ENCODE measurements at regions of chr9 and their contacts with region 1.

Region 1: GRCh38 chr9:99112750-99113413 is 8.0 kb downstream of the TGFBR1 start:
- DNase-seq: no peak
- ATAC-seq: peak; percentile 32
- H3K4me3 ChIP-seq: peak overlapping the region; percentile 10; the same call in 1 of the 2 replicates
- H3K27ac ChIP-seq: no peak overlapping the region
- H3K4me1 ChIP-seq: peaks cover 3% of the 10 kb centered on the region; the same call in 1 of the 2 replicates
- H3K27me3 ChIP-seq: no peaks in the 10 kb centered on the region
- CTCF ChIP-seq: no peak
- EP300 ChIP-seq: no peak
- POLR2A ChIP-seq: no peak
- RAD21 ChIP-seq: no peak

Region 2: DNA sequence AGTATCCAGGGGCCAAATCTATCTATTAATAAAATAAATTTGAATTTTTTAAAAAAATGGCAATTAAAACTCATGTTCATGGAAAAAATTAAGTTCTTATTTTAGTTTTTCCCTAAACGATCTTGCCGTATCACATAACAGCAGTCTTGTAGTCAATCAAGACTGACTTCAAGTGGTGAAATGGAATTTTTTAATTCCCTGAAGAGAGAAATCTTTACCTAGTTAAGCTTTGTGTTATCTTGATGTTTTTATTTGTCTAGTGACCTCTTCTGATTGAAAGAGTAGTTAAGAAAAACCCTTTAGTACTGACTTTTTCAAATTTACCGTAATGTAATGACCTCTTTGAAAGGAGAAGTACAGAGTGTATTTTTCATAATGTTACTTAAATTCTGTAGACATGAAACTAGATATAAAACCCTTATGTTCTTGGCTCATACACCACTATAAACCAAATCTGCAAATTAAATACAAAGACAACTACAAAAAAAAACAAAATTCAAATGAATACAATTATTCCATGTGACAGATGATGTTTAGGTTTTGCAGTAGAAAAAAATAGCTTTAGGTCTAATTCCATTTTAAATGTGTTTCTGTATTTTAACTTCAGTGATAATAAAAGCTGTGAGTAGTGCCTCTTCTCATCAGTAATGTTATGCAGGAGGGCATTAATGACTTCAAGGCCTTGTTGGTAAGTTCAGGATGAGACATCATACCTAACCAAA is 11.8 kb after region 1 on chr9:
- CTCF ChIA-PET with region 1: interaction called, 7 read pairs
- POLR2A ChIA-PET with region 1: interaction called, 9 read pairs
- RAD21 ChIA-PET with region 1: interaction called, 8 read pairs
- SMC1A ChIA-PET with region 1: interaction called, 12 read pairs
- in situ Hi-C with region 1: no loop called
- intact Hi-C with region 1: no loop called
- DNase-seq: no peak
- ATAC-seq: no peak
- H3K4me3 ChIP-seq: no peak overlapping the region
- H3K27ac ChIP-seq: no peak overlapping the region
- H3K4me1 ChIP-seq: peaks cover 36% of the 10 kb centered on the region
- H3K27me3 ChIP-seq: no peaks in the 10 kb centered on the region
- CTCF ChIP-seq: no peak
- EP300 ChIP-seq: no peak
- POLR2A ChIP-seq: no peak
- RAD21 ChIP-seq: no peak

Region 3: GRCh38 chr9:99150451-99151171 is 37.7 kb after region 1 on chr9:
- CTCF ChIA-PET with region 1: no interaction called
- POLR2A ChIA-PET with region 1: no interaction called
- RAD21 ChIA-PET with region 1: no interaction called
- SMC1A ChIA-PET with region 1: no interaction called
- in situ Hi-C with region 1: no loop called
- intact Hi-C with region 1: no loop called
- DNase-seq: no peak
- ATAC-seq: no peak; the same call in 2 of the 3 replicates
- H3K4me3 ChIP-seq: no peak overlapping the region
- H3K27ac ChIP-seq: no peak overlapping the region
- H3K4me1 ChIP-seq: no peaks in the 10 kb centered on the region
- H3K27me3 ChIP-seq: no peaks in the 10 kb centered on the region
- CTCF ChIP-seq: no peak
- EP300 ChIP-seq: no peak
- POLR2A ChIP-seq: no peak
- RAD21 ChIP-seq: no peak